PC-3 (cell line): ENCODE measurements at regions of chr20 and their contacts with region 1.

Region 1: DNA sequence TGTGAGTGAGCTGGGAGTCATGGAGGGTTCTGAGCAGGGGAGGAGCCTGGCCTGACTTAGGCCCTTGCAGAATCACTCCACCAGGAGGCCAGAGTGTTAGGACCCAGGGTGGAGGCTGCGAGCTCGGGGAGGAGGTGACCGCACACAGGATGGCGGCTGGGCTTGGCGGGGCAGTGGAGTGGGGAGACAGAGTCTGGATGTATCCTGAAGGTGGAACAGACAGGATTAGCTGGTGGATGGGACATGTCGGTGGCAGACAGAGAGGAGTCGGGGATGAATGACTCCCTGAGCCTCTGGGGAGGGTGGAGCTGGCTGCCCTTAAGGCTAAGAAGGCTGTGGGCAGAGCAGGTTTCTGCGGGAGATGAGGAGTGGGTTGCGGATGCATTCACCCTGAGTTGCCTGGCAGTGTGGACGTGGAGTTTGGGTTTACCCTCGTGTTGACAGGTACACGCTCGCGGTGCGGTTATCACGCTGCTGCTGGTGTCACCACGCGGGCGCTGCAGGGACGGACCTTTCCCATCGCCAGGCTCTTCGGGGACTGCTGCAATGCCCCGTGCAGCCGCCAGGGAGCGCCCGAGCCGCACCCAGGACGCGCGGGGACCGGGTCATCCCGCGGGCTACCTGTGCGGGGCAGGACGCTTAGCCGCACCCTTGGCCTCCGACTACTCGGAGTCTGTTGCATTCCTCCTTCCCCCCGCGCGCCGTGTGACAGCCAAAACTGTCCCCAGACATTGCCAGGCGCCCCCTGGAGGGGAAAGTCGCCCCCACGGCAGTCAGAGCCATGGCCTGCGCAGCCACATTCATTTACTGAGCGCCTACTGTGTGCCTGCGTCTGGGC is 43.0 kb upstream of the PTGIS start:
- DNase-seq: peak; percentile 93
- ATAC-seq: peak; percentile 70
- H3K4me3 ChIP-seq: peak overlapping the region; percentile 58
- H3K27ac ChIP-seq: no peak overlapping the region
- H3K4me1 ChIP-seq: peaks cover 18% of the 10 kb centered on the region
- H3K27me3 ChIP-seq: no peaks in the 10 kb centered on the region
- CTCF ChIP-seq: peak; percentile 98

Region 2: GRCh38 chr20:49330544-49331239 is 280.2 kb before region 1 on chr20:
- CTCF ChIA-PET with region 1: no interaction called
- POLR2A ChIA-PET with region 1: no interaction called
- intact Hi-C with region 1: loop called (anchors 5 kb)
- DNase-seq: no peak
- ATAC-seq: no peak
- H3K4me3 ChIP-seq: no peak overlapping the region
- H3K27ac ChIP-seq: no peak overlapping the region
- H3K4me1 ChIP-seq: no peaks in the 10 kb centered on the region
- H3K27me3 ChIP-seq: peaks cover 26% of the 10 kb centered on the region; the same call in 1 of the 2 replicates
- CTCF ChIP-seq: no peak

Region 3: DNA sequence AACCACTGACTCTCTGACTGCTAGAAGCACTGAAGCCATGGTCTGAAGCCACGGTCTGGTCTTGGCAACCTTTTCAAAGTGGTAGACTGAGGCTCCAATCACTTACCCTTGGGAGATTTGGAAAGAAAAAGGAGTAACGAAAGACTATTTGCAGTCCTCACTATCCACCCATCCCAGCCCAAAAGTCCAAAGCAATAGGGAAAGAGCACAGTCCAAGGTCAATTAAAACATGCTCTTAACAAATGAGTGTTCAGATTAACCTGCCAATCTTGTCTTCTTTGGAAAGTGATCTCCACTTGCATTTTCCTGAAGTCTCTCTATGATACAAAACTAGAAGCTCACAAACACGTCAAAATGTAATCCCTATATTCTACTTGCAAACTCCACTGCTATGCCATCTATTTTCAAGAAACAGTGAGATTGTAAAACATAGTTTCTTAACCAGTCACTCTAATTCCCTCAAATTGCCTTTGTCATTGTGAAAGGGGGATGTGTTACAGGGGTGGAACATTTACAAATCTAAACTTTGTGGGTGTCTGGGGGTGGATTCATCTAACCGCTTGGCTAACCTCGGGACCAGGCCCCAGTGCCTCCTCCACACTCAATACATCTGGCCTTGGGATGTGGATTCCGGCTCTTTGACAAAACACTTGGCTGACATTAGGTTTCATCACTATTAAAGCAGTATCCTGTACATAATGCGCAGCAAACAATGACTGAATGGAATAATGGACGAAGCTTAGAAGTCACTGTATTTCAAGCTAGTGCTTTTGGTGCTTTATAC is 46.4 kb after region 1 on chr20:
- CTCF ChIA-PET with region 1: no interaction called
- POLR2A ChIA-PET with region 1: no interaction called
- intact Hi-C with region 1: loop called (anchors 1 kb)
- DNase-seq: no peak
- ATAC-seq: no peak
- H3K4me3 ChIP-seq: no peak overlapping the region; the same call in 1 of the 2 replicates
- H3K27ac ChIP-seq: peak overlapping the region; percentile 63
- H3K4me1 ChIP-seq: peaks cover 14% of the 10 kb centered on the region
- H3K27me3 ChIP-seq: no peaks in the 10 kb centered on the region
- CTCF ChIP-seq: no peak

Region 4: DNA sequence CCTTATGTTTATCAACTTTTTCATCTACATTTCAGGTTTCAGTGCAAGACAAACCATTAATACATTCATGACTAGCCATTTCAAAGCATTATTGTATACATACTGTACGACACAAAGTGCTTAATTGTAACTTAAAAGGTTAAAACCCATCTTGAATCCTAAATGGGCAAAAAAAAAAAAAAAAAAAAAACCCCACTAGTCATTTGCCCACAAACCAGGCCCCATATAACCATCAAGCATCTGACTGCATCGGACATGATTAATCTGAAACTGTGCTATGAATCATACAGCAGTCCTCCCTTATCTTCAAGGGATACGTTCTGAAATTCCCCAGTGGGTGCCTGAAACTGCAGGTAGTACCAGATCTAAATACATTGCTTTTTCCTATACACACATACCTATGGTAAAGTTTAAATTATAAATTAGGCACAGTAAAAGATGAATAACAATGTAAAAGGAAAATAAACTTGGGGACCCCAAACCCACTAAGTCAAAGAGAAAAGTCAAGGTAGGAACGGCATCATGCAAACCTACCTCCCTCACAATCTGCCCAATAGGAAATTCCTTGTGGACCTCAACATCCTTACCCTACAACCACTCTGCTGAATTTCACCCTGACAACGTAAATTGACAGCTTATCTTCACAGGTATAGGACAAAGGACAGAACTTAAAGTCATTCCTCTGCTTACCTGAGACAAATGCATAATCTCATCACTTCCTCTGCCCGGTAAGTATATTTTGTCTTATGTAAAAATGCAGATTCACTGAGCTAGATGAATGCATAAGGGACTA is 88.5 kb after region 1 on chr20:
- CTCF ChIA-PET with region 1: no interaction called
- POLR2A ChIA-PET with region 1: no interaction called
- intact Hi-C with region 1: no loop called
- DNase-seq: peak; percentile 88
- ATAC-seq: peak; percentile 76
- H3K4me3 ChIP-seq: no peak overlapping the region
- H3K27ac ChIP-seq: peak overlapping the region; percentile 85
- H3K4me1 ChIP-seq: peaks cover 55% of the 10 kb centered on the region
- H3K27me3 ChIP-seq: no peaks in the 10 kb centered on the region
- CTCF ChIP-seq: no peak

Region 5: GRCh38 chr20:49724408-49725223 is 113.7 kb after region 1 on chr20:
- CTCF ChIA-PET with region 1: interaction called, 3 read pairs
- POLR2A ChIA-PET with region 1: no interaction called
- intact Hi-C with region 1: loop called (anchors 2 kb)
- DNase-seq: peak; percentile 38
- ATAC-seq: peak; percentile 31; the same call in 1 of the 2 replicates
- H3K4me3 ChIP-seq: no peak overlapping the region
- H3K27ac ChIP-seq: no peak overlapping the region
- H3K4me1 ChIP-seq: peaks cover 3% of the 10 kb centered on the region; the same call in 1 of the 2 replicates
- H3K27me3 ChIP-seq: no peaks in the 10 kb centered on the region
- CTCF ChIP-seq: no peak

Region 6: GRCh38 chr20:49846206-49846807 is 235.4 kb after region 1 on chr20:
- CTCF ChIA-PET with region 1: interaction called, 4 read pairs
- POLR2A ChIA-PET with region 1: no interaction called
- intact Hi-C with region 1: loop called (anchors 1 kb)
- DNase-seq: peak; percentile 85
- ATAC-seq: peak; percentile 93
- H3K4me3 ChIP-seq: no peak overlapping the region
- H3K27ac ChIP-seq: no peak overlapping the region
- H3K4me1 ChIP-seq: 0 out of 2 replicates have a peak, but pooled peaks cover 9% of the 10 kb centered on the region
- H3K27me3 ChIP-seq: no peaks in the 10 kb centered on the region
- CTCF ChIP-seq: peak; percentile 85